Endothelial cell of umbilical vein (primary cell): ENCODE measurements at regions of chr11 and their contacts with region 1.

Region 1: GRCh38 chr11:35822815-35823495 is 120.9 kb upstream of the LDLRAD3 start:
- DNase-seq: no peak
- H3K4me3 ChIP-seq: no peak overlapping the region
- H3K27ac ChIP-seq: no peak overlapping the region
- H3K4me1 ChIP-seq: peaks cover 8% of the 10 kb centered on the region
- H3K27me3 ChIP-seq: no peaks in the 10 kb centered on the region
- CTCF ChIP-seq: no peak
- POLR2A ChIP-seq: no peak

Region 2: DNA sequence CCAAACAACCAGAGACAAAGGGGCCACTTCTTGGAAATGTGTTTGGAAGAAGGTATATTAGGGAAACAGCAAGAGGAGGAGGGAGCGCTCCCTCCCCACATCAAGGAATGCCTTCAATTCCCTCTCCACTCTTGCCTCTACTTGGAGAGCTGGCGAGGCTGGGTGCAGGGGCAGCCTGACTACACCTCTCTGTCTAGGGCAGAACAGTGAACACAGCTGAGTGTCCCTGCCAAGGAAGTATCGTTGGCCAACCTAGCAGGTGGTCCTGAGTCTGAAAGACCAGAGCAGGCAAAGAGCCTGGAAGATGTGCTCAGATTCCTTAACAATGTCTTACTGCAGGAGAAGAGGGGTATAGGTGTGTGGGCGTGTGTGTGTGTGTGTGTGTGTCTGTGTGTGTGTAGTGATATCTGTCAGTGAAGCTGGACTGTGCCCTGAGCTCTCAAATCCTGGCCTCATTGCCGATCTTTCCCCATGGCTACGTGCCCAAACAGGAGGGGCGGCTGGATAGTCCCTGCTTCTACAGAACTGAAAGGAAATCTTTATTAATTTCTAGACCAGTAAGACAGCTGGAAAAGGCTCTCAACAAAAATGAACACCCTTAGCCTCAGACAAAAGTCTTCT is 344.4 kb before region 1 on chr11:
- CTCF ChIA-PET with region 1: no interaction called
- POLR2A ChIA-PET with region 1: no interaction called
- dilution Hi-C with region 1: no loop called
- intact Hi-C with region 1: no loop called
- DNase-seq: no peak
- H3K4me3 ChIP-seq: no peak overlapping the region
- H3K27ac ChIP-seq: no peak overlapping the region
- H3K4me1 ChIP-seq: no peaks in the 10 kb centered on the region
- H3K27me3 ChIP-seq: peaks cover 3 to 10% of the 10 kb centered on the region in 2 experiments
- CTCF ChIP-seq: no peak
- POLR2A ChIP-seq: no peak

Region 3: GRCh38 chr11:35662649-35663407 is 160.1 kb before region 1 on chr11 and contains the start of gene TRIM44:
- CTCF ChIA-PET with region 1: interaction called, 23 read pairs
- POLR2A ChIA-PET with region 1: no interaction called
- dilution Hi-C with region 1: no loop called
- intact Hi-C with region 1: loop called (anchors 1 kb)
- DNase-seq: peak; percentile 82
- H3K4me3 ChIP-seq: peak within 1 kb of the TSS; percentile 47 to 59 (median 59)
- H3K27ac ChIP-seq: peak within 1 kb of the TSS; percentile 67
- H3K4me1 ChIP-seq: peaks cover 29% of the 10 kb centered on the region
- H3K27me3 ChIP-seq: no peaks in the 10 kb centered on the region
- CTCF ChIP-seq: no peak
- POLR2A ChIP-seq: peak; percentile 45
- total RNA-seq, gene TRIM44: 62.3 and 72.0 TPM in 2 replicates

Region 4: GRCh38 chr11:35794850-35795249 is 28.1 kb before region 1 on chr11:
- CTCF ChIA-PET with region 1: interaction called, 141 read pairs
- POLR2A ChIA-PET with region 1: interaction called, 6 read pairs
- dilution Hi-C with region 1: no loop called
- intact Hi-C with region 1: no loop called
- DNase-seq: no peak
- H3K4me3 ChIP-seq: no peak overlapping the region
- H3K27ac ChIP-seq: no peak overlapping the region
- H3K4me1 ChIP-seq: peaks cover 45% of the 10 kb centered on the region
- H3K27me3 ChIP-seq: no peaks in the 10 kb centered on the region
- CTCF ChIP-seq: no peak
- POLR2A ChIP-seq: no peak

Region 5: GRCh38 chr11:35934981-35935380 is 112.0 kb after region 1 on chr11:
- CTCF ChIA-PET with region 1: interaction called, 47 read pairs
- POLR2A ChIA-PET with region 1: interaction called, 3 read pairs
- dilution Hi-C with region 1: no loop called
- intact Hi-C with region 1: no loop called
- DNase-seq: no peak
- H3K4me3 ChIP-seq: no peak overlapping the region
- H3K27ac ChIP-seq: no peak overlapping the region
- H3K4me1 ChIP-seq: no peaks in the 10 kb centered on the region
- H3K27me3 ChIP-seq: peaks cover 0 to 5% of the 10 kb centered on the region in 2 experiments
- CTCF ChIP-seq: no peak
- POLR2A ChIP-seq: no peak

Region 6: DNA sequence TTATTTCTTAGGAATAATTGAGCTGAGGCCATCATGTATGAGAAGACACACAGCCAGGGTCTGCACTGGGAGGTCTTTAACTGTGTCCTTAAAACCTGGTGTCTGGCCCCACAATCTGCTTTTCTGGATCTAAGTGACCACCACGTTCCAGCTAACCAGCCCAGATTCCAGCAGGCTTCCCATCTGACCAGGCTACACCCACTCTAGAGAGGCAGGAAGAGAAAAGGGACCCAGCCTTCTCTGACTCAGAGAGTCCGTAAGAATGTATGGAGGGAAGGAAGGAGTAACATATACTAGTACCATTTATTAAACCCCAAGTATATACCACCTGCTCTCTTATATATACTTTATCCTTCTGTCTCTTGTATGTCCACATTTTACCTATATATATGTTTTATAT is 201.0 kb after region 1 on chr11:
- CTCF ChIA-PET with region 1: interaction called, 24 read pairs
- POLR2A ChIA-PET with region 1: no interaction called
- dilution Hi-C with region 1: no loop called
- intact Hi-C with region 1: no loop called
- DNase-seq: peak; percentile 37
- H3K4me3 ChIP-seq: no peak overlapping the region
- H3K27ac ChIP-seq: no peak overlapping the region
- H3K4me1 ChIP-seq: peaks cover 4% of the 10 kb centered on the region
- H3K27me3 ChIP-seq: no peaks in the 10 kb centered on the region
- CTCF ChIP-seq: no peak
- POLR2A ChIP-seq: no peak

Region 7: GRCh38 chr11:36123346-36124101 is 300.6 kb after region 1 on chr11:
- CTCF ChIA-PET with region 1: interaction called, 24 read pairs
- POLR2A ChIA-PET with region 1: no interaction called
- dilution Hi-C with region 1: no loop called
- intact Hi-C with region 1: no loop called
- DNase-seq: no peak
- H3K4me3 ChIP-seq: no peak overlapping the region
- H3K27ac ChIP-seq: no peak overlapping the region
- H3K4me1 ChIP-seq: peaks cover 16% of the 10 kb centered on the region
- H3K27me3 ChIP-seq: no peaks in the 10 kb centered on the region
- CTCF ChIP-seq: no peak
- POLR2A ChIP-seq: no peak

Region 8: GRCh38 chr11:36492724-36493304 is 669.9 kb after region 1 on chr11:
- CTCF ChIA-PET with region 1: interaction called, 10 read pairs
- POLR2A ChIA-PET with region 1: no interaction called
- dilution Hi-C with region 1: no loop called
- intact Hi-C with region 1: no loop called
- DNase-seq: peak; percentile 68
- H3K4me3 ChIP-seq: no peak overlapping the region
- H3K27ac ChIP-seq: no peak overlapping the region
- H3K4me1 ChIP-seq: peaks cover 10% of the 10 kb centered on the region
- H3K27me3 ChIP-seq: no peaks in the 10 kb centered on the region
- CTCF ChIP-seq: peak; percentile 63 to 66
- POLR2A ChIP-seq: no peak

Region 9: GRCh38 chr11:36865846-36866245 is 1042.9 kb after region 1 on chr11:
- CTCF ChIA-PET with region 1: no interaction called
- POLR2A ChIA-PET with region 1: no interaction called
- dilution Hi-C with region 1: no loop called
- intact Hi-C with region 1: no loop called
- DNase-seq: no peak
- H3K4me3 ChIP-seq: no peak overlapping the region
- H3K27ac ChIP-seq: no peak overlapping the region
- H3K4me1 ChIP-seq: no peaks in the 10 kb centered on the region
- H3K27me3 ChIP-seq: no peaks in the 10 kb centered on the region
- CTCF ChIP-seq: no peak
- POLR2A ChIP-seq: no peak